ENCODE measurements at regions of chr17 and their contacts with region 1.

Region 1: DNA sequence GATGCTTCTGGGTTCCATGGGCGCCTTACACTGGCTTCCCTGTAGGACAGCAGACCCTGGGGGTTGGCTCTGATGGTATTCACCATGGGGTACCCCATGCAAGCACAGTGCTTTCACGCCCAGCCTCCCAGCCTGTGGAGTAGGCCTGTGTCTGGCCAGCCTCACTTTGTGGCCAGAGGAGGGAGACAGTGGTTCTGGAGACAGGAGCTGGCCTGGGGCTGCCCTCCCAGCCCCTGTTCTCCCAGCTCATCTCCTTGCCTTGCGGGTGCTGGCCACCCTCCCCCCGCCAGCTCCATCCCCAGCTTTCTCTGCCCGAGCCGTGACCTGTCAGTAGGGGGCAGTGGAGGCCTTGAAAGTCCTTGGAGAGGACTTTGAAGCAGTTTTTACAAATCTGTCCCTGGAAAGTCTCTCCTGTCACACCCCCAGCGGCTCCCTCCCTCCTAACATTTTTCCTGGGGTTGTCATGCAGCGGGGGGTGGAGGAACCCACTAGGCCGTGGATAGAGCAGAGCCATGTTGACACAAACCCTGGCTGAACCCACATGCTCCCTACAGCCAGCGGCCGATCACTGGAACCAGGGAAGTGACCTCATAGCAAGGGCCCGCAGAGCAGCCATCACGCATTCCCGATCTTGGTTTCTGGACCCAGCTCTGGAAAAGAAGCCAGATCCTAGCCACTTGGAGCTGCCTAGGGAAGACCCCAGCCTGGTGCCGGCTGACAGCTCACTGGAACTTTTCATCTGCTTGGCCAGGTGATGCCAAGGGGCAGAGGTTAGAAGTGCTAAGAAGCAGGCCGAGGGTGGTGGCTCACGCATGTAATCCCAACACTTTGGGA is 289.4 kb downstream of the SEC14L1 start:
- DNase-seq: peak; percentile 90
- H3K4me3 ChIP-seq: no peak overlapping the region
- H3K27ac ChIP-seq: peak overlapping the region in 1 of 2 donors; percentile 50
- H3K4me1 ChIP-seq: peaks cover 81% of the 10 kb centered on the region
- H3K27me3 ChIP-seq: no peaks in the 10 kb centered on the region
- CTCF ChIP-seq: peak; percentile 72 to 82 (median 75)
- POLR2A ChIP-seq: no peak

Region 2: GRCh38 chr17:77331301-77331864 is 98.8 kb before region 1 on chr17:
- intact Hi-C with region 1: loop called (anchors 5 kb)
- DNase-seq: peak; percentile 96
- H3K4me3 ChIP-seq: no peak overlapping the region
- H3K27ac ChIP-seq: no peak overlapping the region
- H3K4me1 ChIP-seq: peaks cover 7% of the 10 kb centered on the region
- H3K27me3 ChIP-seq: no peaks in the 10 kb centered on the region
- CTCF ChIP-seq: peak; percentile 93 to 96 (median 95)
- POLR2A ChIP-seq: no peak

Region 3: GRCh38 chr17:77343031-77343800 is 86.9 kb before region 1 on chr17:
- intact Hi-C with region 1: no loop called
- DNase-seq: peak; percentile 5
- H3K4me3 ChIP-seq: no peak overlapping the region
- H3K27ac ChIP-seq: no peak overlapping the region
- H3K4me1 ChIP-seq: no peaks in the 10 kb centered on the region
- H3K27me3 ChIP-seq: no peaks in the 10 kb centered on the region
- CTCF ChIP-seq: no peak
- POLR2A ChIP-seq: no peak

Region 4: GRCh38 chr17:77479372-77480198 is 49.4 kb after region 1 on chr17:
- intact Hi-C with region 1: loop called (anchors 5 kb)
- DNase-seq: no peak
- H3K4me3 ChIP-seq: no peak overlapping the region
- H3K27ac ChIP-seq: peak overlapping the region in 1 of 2 donors; percentile 64
- H3K4me1 ChIP-seq: peaks cover 90% of the 10 kb centered on the region
- H3K27me3 ChIP-seq: no peaks in the 10 kb centered on the region
- CTCF ChIP-seq: no peak
- POLR2A ChIP-seq: no peak

Region 5: DNA sequence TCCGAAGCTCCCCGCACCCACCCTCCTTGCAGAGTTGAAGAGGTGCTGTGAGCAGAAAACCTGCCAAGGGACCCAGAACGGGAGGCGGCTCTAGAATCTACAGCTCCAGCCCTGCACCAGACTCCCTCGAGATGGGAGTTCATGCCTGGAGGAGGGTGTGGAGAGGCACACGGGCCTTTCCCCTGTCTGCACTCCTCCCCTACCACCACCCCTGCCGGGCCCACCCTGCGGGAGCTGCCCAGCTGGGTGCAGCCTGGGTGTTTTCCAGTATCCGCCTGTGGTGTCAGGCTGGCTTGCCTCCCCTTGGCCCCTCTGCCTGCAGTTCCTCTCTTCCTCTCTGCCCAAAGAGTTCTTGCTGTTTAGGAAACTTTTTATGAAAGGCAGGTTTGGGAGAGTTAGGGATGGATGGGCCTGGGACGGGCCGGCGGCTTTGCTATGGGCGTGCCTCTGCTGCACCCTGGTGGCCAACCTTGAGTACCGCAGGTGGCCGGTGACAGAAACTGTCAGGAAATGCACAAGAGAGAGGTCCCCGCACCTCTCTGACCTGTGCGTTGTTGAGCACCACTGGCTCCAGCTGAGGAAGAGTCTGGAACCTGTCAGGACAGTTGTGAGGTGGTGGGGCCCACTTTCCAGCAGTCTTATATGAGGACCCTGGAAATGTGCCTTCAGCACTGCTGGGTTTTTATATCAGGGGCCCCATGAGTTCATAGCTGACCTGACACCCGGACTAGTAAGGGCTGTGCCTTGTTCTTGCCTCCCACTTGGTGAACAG is 64.7 kb after region 1 on chr17:
- intact Hi-C with region 1: loop called (anchors 5 kb)
- DNase-seq: peak; percentile 90
- H3K4me3 ChIP-seq: no peak overlapping the region
- H3K27ac ChIP-seq: no peak overlapping the region
- H3K4me1 ChIP-seq: peaks cover 8% of the 10 kb centered on the region
- H3K27me3 ChIP-seq: no peaks in the 10 kb centered on the region
- CTCF ChIP-seq: peak; percentile 99
- POLR2A ChIP-seq: no peak